Activated CD4-positive, alpha-beta memory T cell treated with anti-CD3 and anti-CD28 coated beads, Interleukin-2, amount 10 ng/mL, durations not matched to agents 7 days and 5 days (primary cell): ENCODE measurements at regions of chr16 and their contacts with region 1.

Region 1: GRCh38 chr16:370443-370842 is at the start of gene MRPL28:
- DNase-seq: peak; percentile 96
- H3K4me3 Mint-ChIP-seq: peak within 1 kb of the TSS; percentile 82
- H3K27ac Mint-ChIP-seq: peak within 1 kb of the TSS; percentile 77
- H3K4me1 Mint-ChIP-seq: peaks cover 18% of the 10 kb centered on the region
- H3K27me3 Mint-ChIP-seq: no peaks in the 10 kb centered on the region
- total RNA-seq, gene MRPL28: 71.4 to 72.6 TPM

Region 2: GRCh38 chr16:381789-382717 is 11.6 kb after region 1 on chr16 and contains the start of gene PGAP6:
- CTCF ChIA-PET with region 1: no interaction called
- POLR2A ChIA-PET with region 1: interaction called, 23 read pairs
- DNase-seq: peak; percentile 76
- H3K4me3 Mint-ChIP-seq: peak within 1 kb of the TSS; percentile 83
- H3K27ac Mint-ChIP-seq: peak within 1 kb of the TSS; percentile 61
- H3K4me1 Mint-ChIP-seq: peaks cover 24% of the 10 kb centered on the region
- H3K27me3 Mint-ChIP-seq: peaks cover 10% of the 10 kb centered on the region
- total RNA-seq, gene PGAP6: 59.2 to 59.9 TPM